Activated T-helper 2 cell treated with anti-CD3 and anti-CD28 coated beads, Interferon-gamma antibody, Interleukin-2, Interleukin-4, amounts not matched to agents 10 μg/mL and 5 μg/mL and 100 μg/mL, durations not matched to agents 14 hours and 24 hours and 36 hours (primary cell): ENCODE measurements at regions of chr1 and their contacts with region 1.

Region 1: GRCh38 chr1:111755331-111756123 is at the start of gene DDX20:
- DNase-seq: peak; percentile 93
- H3K4me3 Mint-ChIP-seq: peak within 1 kb of the TSS; percentile 87
- H3K27ac Mint-ChIP-seq: peak within 1 kb of the TSS; percentile 98
- H3K4me1 Mint-ChIP-seq: peaks cover 49% of the 10 kb centered on the region
- H3K27me3 Mint-ChIP-seq: no peaks in the 10 kb centered on the region
- total RNA-seq, gene DDX20: 18.6 and 20.0 TPM in 2 replicates

Region 2: DNA sequence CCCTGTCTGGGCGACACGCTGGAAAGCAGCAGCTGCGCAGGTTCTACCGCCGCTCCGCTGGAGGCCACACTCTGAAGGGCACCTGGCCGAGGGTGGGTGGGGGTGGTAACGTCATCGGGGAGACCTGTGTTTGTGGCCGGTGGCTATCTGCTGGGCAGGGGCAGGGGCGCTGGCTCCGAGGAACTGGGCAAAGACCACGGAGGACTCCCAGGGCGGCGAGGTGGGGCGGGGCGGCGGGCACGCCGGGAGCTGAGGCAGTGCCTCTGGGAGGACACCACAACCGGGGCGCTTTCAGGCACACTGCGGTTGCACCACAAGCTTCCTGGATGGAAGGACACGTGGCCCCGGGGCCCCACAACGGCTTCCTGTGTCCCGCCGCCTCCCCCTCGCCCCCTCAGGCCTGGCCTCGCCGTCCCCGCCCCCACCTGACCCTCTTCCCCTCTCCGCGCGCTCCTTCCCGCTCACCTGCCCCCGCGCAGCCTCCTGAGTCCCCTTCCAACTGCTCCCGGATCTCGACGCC is 551.8 kb before region 1 on chr1:
- intact Hi-C with region 1: loop called (anchors 5 kb)
- DNase-seq: peak; percentile 83
- H3K4me3 Mint-ChIP-seq: peak overlapping the region; percentile 98
- H3K27ac Mint-ChIP-seq: peak overlapping the region; percentile 97
- H3K4me1 Mint-ChIP-seq: peaks cover 61% of the 10 kb centered on the region
- H3K27me3 Mint-ChIP-seq: no peaks in the 10 kb centered on the region

Region 3: GRCh38 chr1:111448918-111449702 is 306.4 kb before region 1 on chr1 and contains the starts of genes ATP5PB and WDR77:
- intact Hi-C with region 1: loop called (anchors 1 kb)
- DNase-seq: peak; percentile 91
- H3K4me3 Mint-ChIP-seq: peak within 1 kb of the TSS; percentile 100
- H3K27ac Mint-ChIP-seq: peak within 1 kb of the TSS; percentile 96
- H3K4me1 Mint-ChIP-seq: peaks cover 52% of the 10 kb centered on the region
- H3K27me3 Mint-ChIP-seq: no peaks in the 10 kb centered on the region
- total RNA-seq, gene ATP5PB: 294 and 308 TPM in 2 replicates
- total RNA-seq, gene WDR77: 46.5 and 52.6 TPM in 2 replicates

Region 4: GRCh38 chr1:111481387-111482221 is 273.9 kb before region 1 on chr1:
- intact Hi-C with region 1: loop called (anchors 1 kb)
- DNase-seq: peak; percentile 42
- H3K4me3 Mint-ChIP-seq: no peak overlapping the region
- H3K27ac Mint-ChIP-seq: no peak overlapping the region
- H3K4me1 Mint-ChIP-seq: peaks cover 27% of the 10 kb centered on the region
- H3K27me3 Mint-ChIP-seq: peaks cover 9% of the 10 kb centered on the region

Region 5: GRCh38 chr1:111720977-111721786 is 34.3 kb before region 1 on chr1:
- intact Hi-C with region 1: loop called (anchors 5 kb)
- DNase-seq: no peak
- H3K4me3 Mint-ChIP-seq: no peak overlapping the region
- H3K27ac Mint-ChIP-seq: no peak overlapping the region
- H3K4me1 Mint-ChIP-seq: peaks cover 7% of the 10 kb centered on the region
- H3K27me3 Mint-ChIP-seq: no peaks in the 10 kb centered on the region

Region 6: GRCh38 chr1:111739194-111739924 is 16.2 kb before region 1 on chr1 and contains the start of gene INKA2:
- intact Hi-C with region 1: loop called (anchors 1 kb)
- DNase-seq: peak; percentile 80
- H3K4me3 Mint-ChIP-seq: peak within 1 kb of the TSS; percentile 93
- H3K27ac Mint-ChIP-seq: peak within 1 kb of the TSS; percentile 88
- H3K4me1 Mint-ChIP-seq: peaks cover 16% of the 10 kb centered on the region
- H3K27me3 Mint-ChIP-seq: peaks cover 38% of the 10 kb centered on the region
- total RNA-seq, gene INKA2: 0.43 and 2.2 TPM in 2 replicates

Region 7: DNA sequence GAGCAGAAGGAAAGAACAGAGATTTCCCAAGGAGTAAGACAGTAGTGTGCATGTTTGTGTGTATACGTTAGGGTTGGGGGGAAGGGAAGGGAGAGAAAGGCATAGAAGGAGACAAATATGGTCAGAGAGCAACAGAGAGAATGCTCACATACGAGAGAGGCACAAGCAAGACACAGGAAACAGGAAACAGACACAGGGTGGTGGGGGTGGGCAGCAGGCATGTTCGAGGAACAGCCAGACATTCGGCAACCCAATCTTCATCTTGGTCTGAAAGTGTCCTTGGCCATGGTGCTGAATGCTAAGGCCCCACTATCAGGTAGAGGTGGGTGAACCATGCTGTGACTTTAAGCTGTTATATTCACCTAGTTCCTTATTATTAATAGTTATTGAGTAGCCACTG is 109.3 kb after region 1 on chr1:
- intact Hi-C with region 1: no loop called
- DNase-seq: no peak
- H3K4me3 Mint-ChIP-seq: no peak overlapping the region
- H3K27ac Mint-ChIP-seq: no peak overlapping the region
- H3K4me1 Mint-ChIP-seq: no peaks in the 10 kb centered on the region
- H3K27me3 Mint-ChIP-seq: peaks cover 8% of the 10 kb centered on the region